Motor neuron (in vitro differentiated cells): ENCODE measurements at regions of chr9 and their contacts with region 1.

Region 1: DNA sequence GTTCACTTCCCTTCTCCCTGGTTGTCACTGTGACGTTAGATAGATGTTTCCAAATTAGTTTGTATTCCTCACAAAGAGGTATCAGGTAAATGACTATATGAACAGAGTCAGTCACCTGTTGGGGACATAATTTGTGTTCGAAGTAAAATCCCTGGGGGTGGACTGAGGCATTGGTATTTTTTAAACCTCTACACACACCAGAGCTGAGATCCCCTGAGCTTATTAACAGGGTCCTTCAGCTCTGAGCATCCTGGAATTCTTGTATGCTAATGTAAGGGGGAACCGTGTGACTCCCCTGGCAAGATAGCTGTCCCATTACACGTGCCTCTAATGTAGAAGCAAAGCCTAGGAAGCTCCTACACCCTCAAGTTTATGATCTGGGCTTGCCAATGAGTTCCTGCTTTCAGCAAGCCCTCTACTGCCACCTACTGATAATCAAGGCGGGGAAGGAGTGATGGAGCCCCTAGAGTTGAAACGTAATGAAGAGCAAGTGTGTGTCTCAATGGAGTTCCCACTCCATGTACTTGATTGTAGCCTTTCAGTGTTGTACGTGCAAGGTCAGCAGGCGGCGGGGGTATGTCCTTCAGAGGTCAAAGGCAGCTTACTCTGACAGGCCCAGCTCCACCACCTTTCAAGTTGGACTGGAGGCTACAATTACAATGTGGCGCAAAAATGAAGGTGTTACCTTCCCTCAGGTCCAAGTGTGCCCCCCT is 14.4 kb downstream of the PRKACG start:
- ATAC-seq: peak; percentile 62 to 99 (median 84)
- H3K4me3 ChIP-seq: no peak overlapping the region
- H3K27ac ChIP-seq: no peak overlapping the region
- H3K4me1 ChIP-seq: peaks cover 0 to 2% of the 10 kb centered on the region in 2 donors

Region 2: DNA sequence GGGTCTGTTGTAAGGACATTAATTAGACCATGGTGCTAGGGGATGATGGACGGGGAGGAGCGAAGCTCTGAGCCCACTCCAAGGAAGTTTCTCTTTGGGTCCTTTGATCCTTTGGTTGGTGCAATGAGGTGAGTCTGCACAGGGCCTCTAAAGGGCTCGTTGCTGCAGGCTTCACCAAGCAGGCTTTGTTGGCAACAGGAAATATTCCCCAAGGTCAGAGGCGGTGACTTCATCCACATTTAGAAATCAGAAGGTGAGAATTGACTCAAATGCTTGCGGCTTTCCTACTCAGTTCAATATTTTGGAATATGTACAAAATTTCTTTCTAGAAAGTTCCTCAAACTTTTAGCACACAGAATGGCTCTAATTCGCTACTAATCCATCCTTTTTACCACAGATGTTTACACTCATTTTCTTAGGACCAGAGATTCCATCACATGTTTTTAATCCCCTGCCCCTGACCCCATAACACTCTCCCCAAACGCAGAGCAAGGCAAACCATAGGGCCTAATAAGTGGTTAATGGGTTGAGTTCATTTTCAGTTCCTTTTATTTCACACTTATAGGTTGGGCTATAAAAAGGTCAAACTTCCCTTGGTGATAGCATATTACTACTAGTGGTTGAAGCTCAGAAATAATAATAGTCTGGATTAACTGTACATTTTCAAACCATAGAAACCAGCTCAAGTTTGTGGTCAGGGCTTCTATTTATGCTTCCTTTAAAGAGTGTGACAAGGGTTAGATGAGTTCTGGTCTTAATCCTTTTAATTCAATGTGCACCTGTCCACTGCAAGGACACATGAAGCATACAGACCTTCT is 421.6 kb before region 1 on chr9:
- in situ Hi-C with region 1: loop called in 6 of 9 experiments (anchors 10 to 25 kb)
- ATAC-seq: no peak
- H3K4me3 ChIP-seq: no peak overlapping the region
- H3K27ac ChIP-seq: no peak overlapping the region
- H3K4me1 ChIP-seq: no peaks in the 10 kb centered on the region

Region 3: DNA sequence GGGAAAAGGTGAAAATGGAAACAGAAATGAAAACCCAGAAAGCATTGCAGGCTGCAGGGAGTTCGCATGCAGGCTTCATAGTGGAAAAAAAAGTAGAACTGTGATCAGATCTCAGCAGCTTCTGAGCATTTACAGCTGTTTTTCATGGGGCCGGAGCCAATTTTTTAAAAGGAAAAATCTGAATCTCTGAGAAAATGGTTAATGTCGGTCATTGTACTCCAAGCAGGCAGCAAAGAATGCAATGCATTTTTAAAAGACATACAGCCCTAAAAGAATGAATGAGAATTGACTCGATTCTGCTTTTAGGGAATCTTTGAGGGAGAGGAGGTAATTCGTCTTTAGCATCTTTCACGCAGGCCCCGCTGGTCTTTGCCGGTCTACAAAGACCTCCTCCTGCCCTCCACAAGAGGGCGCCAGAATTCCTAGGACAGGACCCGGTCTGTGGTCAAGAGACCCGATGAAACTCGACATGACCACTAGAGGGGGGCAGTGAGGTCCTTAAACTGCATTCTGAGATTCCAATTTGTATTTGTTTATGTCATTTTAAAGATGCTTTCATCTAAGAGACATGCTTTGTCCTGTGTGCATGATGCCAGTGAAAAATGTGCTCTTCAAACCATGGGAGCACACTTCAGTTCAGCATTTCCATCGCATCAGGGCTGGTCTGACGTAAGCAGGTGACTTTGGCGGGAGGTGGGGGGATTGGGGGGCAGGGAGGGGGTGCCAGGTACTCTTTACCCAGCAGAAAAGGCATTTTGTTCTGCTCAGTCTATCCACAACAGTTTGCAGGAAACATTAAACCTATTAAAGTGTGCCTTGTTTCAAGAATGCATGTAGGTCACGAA is 415.1 kb before region 1 on chr9:
- in situ Hi-C with region 1: loop called in 6 of 9 experiments (anchors 10 to 25 kb)
- ATAC-seq: peak; percentile 85 to 100 (median 96)
- H3K4me3 ChIP-seq: no peak overlapping the region
- H3K27ac ChIP-seq: no peak overlapping the region
- H3K4me1 ChIP-seq: no peaks in the 10 kb centered on the region

Region 4: GRCh38 chr9:68595868-68596267 is 403.7 kb before region 1 on chr9:
- in situ Hi-C with region 1: loop called in 4 of 9 experiments (anchors 10 to 25 kb)
- ATAC-seq: no peak
- H3K4me3 ChIP-seq: no peak overlapping the region
- H3K27ac ChIP-seq: no peak overlapping the region
- H3K4me1 ChIP-seq: no peaks in the 10 kb centered on the region

Region 5: GRCh38 chr9:68653141-68653595 is 346.4 kb before region 1 on chr9:
- in situ Hi-C with region 1: loop called in 1 of 9 experiments (anchors 25 kb)
- ATAC-seq: no peak
- H3K4me3 ChIP-seq: no peak overlapping the region
- H3K27ac ChIP-seq: no peak overlapping the region
- H3K4me1 ChIP-seq: no peaks in the 10 kb centered on the region

Region 6: GRCh38 chr9:68704814-68705530 is 294.6 kb before region 1 on chr9 and contains the start of gene PIP5K1B:
- in situ Hi-C with region 1: loop called in 1 of 9 experiments (anchors 25 kb)
- ATAC-seq: peak; percentile 66 to 96 (median 78)
- H3K4me3 ChIP-seq: peak within 1 kb of the TSS; percentile 60 to 98 (median 87)
- H3K27ac ChIP-seq: peak within 1 kb of the TSS in 1 of 2 donors; percentile 33
- H3K4me1 ChIP-seq: peaks cover 4 to 7% of the 10 kb centered on the region in 2 donors
- total RNA-seq, gene PIP5K1B: 0.18 to 2.4 (median 0.47) TPM

Region 7: DNA sequence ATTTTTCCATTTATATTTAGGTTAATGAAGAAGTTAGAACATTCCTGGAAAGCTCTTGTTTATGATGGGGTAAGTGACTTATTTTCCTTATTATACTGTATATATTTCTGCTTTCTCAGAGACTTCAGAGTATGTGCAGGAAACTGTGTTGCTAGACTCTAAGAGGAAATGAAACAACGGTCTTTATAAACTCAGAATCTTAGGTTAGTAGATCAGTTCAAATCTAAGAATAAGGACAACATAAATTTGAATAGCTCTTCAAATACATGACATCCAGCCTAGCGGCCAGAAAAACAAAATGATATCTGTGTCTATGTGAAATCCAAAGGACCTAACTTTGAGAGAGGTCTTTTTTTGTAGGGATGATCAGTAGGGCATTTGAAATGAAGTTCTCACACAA is 79.9 kb before region 1 on chr9:
- in situ Hi-C with region 1: loop called in 1 of 9 experiments (anchors 25 kb)
- ATAC-seq: no peak
- H3K4me3 ChIP-seq: no peak overlapping the region
- H3K27ac ChIP-seq: no peak overlapping the region
- H3K4me1 ChIP-seq: no peaks in the 10 kb centered on the region

Region 8: DNA sequence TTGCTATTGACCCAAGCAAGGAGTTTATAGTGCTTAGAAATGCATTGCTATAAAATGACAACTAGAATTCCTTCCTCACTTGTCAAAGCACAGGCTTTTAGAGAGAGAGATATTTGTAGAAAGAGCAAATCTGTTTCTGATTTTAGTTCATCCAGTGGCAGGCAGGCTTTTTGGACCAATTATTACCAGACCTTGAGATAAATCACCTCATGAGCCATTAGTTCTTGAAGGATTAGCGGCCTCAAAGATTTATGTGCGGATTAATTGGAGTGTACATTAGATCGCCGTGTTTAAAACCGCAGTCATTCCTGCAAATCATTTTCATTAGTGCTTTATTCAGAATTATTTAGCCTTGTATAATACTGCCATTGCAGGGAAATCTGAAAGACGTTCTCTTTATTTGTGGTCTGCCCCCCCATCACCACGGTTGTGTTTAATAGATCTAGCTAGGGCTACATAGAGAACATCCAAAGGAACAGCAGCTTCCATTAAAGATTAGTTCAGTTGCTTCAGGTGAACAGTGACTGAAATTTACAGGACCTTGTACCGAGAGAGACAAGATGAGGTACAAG is 145.7 kb after region 1 on chr9:
- in situ Hi-C with region 1: no loop called
- ATAC-seq: peak in 5 of 8 experiments; percentile 79 to 94 (median 89)
- H3K4me3 ChIP-seq: no peak overlapping the region
- H3K27ac ChIP-seq: no peak overlapping the region
- H3K4me1 ChIP-seq: peaks cover 0 to 16% of the 10 kb centered on the region in 2 donors

Region 9: DNA sequence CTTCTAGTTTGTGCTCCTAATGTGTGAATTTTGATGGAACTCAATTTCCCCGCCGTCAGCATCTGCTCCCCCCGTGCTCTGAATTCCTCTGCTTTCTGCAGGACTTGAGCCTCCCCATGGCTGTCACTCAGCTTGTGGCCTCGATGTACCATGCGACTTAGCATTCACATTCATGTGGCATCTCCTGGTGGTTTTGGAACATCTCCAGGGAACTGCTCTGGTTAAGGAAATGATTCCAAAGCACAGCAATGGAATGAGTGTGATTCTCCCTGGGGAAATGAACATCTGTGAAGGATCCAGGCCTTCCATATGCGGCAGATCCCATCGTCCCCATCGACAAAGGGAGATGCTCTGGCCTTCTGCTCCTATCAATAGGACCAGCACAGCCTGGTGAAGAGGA is 444.5 kb after region 1 on chr9:
- in situ Hi-C with region 1: no loop called
- ATAC-seq: peak in 1 of 8 experiments; percentile 22
- H3K4me3 ChIP-seq: no peak overlapping the region
- H3K27ac ChIP-seq: no peak overlapping the region
- H3K4me1 ChIP-seq: peaks cover 0 to 5% of the 10 kb centered on the region in 2 donors